Activated CD8-positive, alpha-beta T cell treated with anti-CD3 and anti-CD28 coated beads for 36 hours (primary cell): ENCODE measurements at regions of chr1 and their contacts with region 1.

Region 1: GRCh38 chr1:157496121-157496526 is 56.2 kb downstream of the FCRL5 start:
- DNase-seq: peak; percentile 58
- ATAC-seq: peak; percentile 76
- H3K4me3 Mint-ChIP-seq: no peak overlapping the region
- H3K27ac Mint-ChIP-seq: no peak overlapping the region
- H3K4me1 Mint-ChIP-seq: no peaks in the 10 kb centered on the region
- H3K27me3 Mint-ChIP-seq: peaks cover 19% of the 10 kb centered on the region
- CTCF ChIP-seq: peak; percentile 93

Region 2: GRCh38 chr1:157193702-157194391 is 302.3 kb before region 1 on chr1:
- CTCF ChIA-PET with region 1: interaction called, 12 read pairs
- POLR2A ChIA-PET with region 1: no interaction called
- intact Hi-C with region 1: loop called (anchors 5 kb)
- DNase-seq: peak; percentile 81
- ATAC-seq: peak; percentile 61
- H3K4me3 Mint-ChIP-seq: no peak overlapping the region
- H3K27ac Mint-ChIP-seq: no peak overlapping the region
- H3K4me1 Mint-ChIP-seq: no peaks in the 10 kb centered on the region
- H3K27me3 Mint-ChIP-seq: peaks cover 17% of the 10 kb centered on the region
- CTCF ChIP-seq: peak; percentile 85

Region 3: DNA sequence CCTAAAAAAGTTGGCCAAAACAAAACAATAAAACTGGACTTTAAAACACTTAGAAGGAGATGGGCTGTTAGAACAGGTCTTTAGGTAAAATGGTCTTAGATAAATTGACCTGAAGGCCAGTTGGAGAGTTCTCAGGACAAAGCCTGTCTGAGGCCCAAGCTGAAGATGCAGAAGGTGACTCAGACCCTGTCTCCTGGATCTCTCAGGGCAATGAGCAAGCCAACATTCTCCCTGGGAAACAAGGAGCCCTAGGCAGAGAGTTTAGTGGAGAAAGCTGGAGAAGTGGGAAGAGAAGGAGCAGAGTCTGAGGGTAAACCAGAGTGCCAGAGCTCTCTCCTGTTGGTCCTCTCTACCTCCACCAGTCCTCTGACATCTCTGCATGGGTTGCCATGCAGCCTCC is 13.9 kb before region 1 on chr1:
- CTCF ChIA-PET with region 1: interaction called, 16 read pairs
- POLR2A ChIA-PET with region 1: no interaction called
- intact Hi-C with region 1: no loop called
- DNase-seq: no peak
- ATAC-seq: no peak
- H3K4me3 Mint-ChIP-seq: no peak overlapping the region
- H3K27ac Mint-ChIP-seq: no peak overlapping the region
- H3K4me1 Mint-ChIP-seq: no peaks in the 10 kb centered on the region
- H3K27me3 Mint-ChIP-seq: peaks cover 6% of the 10 kb centered on the region
- CTCF ChIP-seq: no peak